ENCODE measurements at regions of chr17 and their contacts with region 1.

Region 1: GRCh38 chr17:57523926-57524632 is 221.0 kb downstream of the CCDC182 start:
- DNase-seq: peak; percentile 71 to 92
- ATAC-seq: peak; percentile 92 to 95 (median 94)
- H3K4me3 ChIP-seq: peak overlapping the region; percentile 25
- H3K27ac ChIP-seq: peak overlapping the region; percentile 64
- H3K4me1 ChIP-seq: peaks cover 26% of the 10 kb centered on the region
- H3K27me3 ChIP-seq: no peaks in the 10 kb centered on the region
- CTCF ChIP-seq: no peak

Region 2: GRCh38 chr17:57493171-57493570 is 30.9 kb before region 1 on chr17:
- intact Hi-C with region 1: loop called in 1 of 2 experiments (anchors 1 kb)
- DNase-seq: no peak
- ATAC-seq: no peak
- H3K4me3 ChIP-seq: no peak overlapping the region
- H3K27ac ChIP-seq: no peak overlapping the region
- H3K4me1 ChIP-seq: peaks cover 49% of the 10 kb centered on the region
- H3K27me3 ChIP-seq: no peaks in the 10 kb centered on the region
- CTCF ChIP-seq: no peak

Measured in psoas muscle (tissue), 8 donors.